T-cell (primary cell): ENCODE measurements at regions of chr4 and their contacts with region 1.

Region 1: GRCh38 chr4:98688411-98689290 is 30.2 kb upstream of the TSPAN5 start:
- DNase-seq: peak in 5 of 35 experiments; percentile 9 to 56 (median 15)
- ATAC-seq: peak; percentile 67 to 83 (median 71)
- H3K4me3 ChIP-seq: no peak overlapping the region
- H3K4me3 Mint-ChIP-seq: peak overlapping the region; percentile 18 to 63 (median 55)
- H3K27ac ChIP-seq: peak overlapping the region; percentile 39
- H3K27ac Mint-ChIP-seq: peak overlapping the region; percentile 81 to 90
- H3K4me1 ChIP-seq: peaks cover 12 to 15% of the 10 kb centered on the region in 2 experiments
- H3K4me1 Mint-ChIP-seq: peaks cover 41 to 58% (median 54%) of the 10 kb centered on the region in 3 donors
- H3K27me3 ChIP-seq: no peaks in the 10 kb centered on the region
- H3K27me3 Mint-ChIP-seq: no peaks in the 10 kb centered on the region

Region 2: GRCh38 chr4:98639523-98639922 is 49.1 kb before region 1 on chr4:
- CTCF ChIA-PET with region 1: no interaction called
- POLR2A ChIA-PET with region 1: no interaction called
- DNase-seq: peak in 2 of 35 experiments; percentile 7 to 53
- ATAC-seq: peak; percentile 40 to 85 (median 61)
- H3K4me3 ChIP-seq: peak overlapping the region in 1 of 2 donors; percentile 20
- H3K4me3 Mint-ChIP-seq: peak overlapping the region; percentile 70 to 78 (median 73)
- H3K27ac ChIP-seq: peak overlapping the region; percentile 57
- H3K27ac Mint-ChIP-seq: peak overlapping the region; percentile 90 to 92
- H3K4me1 ChIP-seq: peaks cover 2 to 18% of the 10 kb centered on the region in 2 experiments
- H3K4me1 Mint-ChIP-seq: peaks cover 45 to 58% (median 55%) of the 10 kb centered on the region in 3 donors
- H3K27me3 ChIP-seq: no peaks in the 10 kb centered on the region
- H3K27me3 Mint-ChIP-seq: no peaks in the 10 kb centered on the region

Region 3: DNA sequence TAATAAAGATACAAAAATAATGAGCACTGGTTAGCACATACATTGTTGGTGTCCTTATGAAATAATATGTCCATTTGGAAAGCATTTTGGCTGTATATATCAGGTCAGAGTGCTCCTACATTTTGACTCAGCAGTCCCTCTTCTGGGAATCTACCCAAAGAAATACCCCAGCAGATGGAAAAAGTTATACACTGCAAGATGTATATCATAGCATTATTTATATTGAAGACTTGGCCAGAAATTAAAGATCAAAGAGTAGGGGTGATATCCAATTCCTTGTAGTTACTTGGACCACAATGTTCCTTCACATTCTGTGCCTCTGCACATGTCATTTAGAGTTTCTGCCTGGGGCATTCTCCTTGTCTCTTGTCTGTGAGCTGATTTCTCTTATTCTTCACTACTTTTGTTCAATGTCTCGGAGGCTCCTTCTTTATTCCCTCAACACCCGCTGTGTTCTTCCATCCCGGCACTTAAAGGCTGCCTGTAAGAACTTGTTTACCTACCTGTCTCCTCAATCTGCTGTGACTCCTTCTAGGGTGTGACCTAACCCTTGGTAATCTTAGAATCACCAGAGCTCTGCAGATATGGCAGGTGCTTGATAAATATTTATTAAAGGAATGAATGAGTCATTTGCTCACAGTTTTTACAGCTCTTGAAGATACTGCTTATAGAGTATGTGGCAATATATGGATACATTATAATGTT is 27.1 kb before region 1 on chr4:
- CTCF ChIA-PET with region 1: interaction called in 1 of 2 experiments, 3 read pairs
- POLR2A ChIA-PET with region 1: interaction called in 1 of 2 experiments, 13 read pairs
- DNase-seq: no peak
- ATAC-seq: no peak
- H3K4me3 ChIP-seq: no peak overlapping the region
- H3K4me3 Mint-ChIP-seq: no peak overlapping the region
- H3K27ac ChIP-seq: peak overlapping the region; percentile 97
- H3K27ac Mint-ChIP-seq: peak overlapping the region; percentile 98 to 99
- H3K4me1 ChIP-seq: peaks cover 40 to 49% of the 10 kb centered on the region in 2 experiments
- H3K4me1 Mint-ChIP-seq: peaks cover 66 to 70% (median 68%) of the 10 kb centered on the region in 3 donors
- H3K27me3 ChIP-seq: no peaks in the 10 kb centered on the region
- H3K27me3 Mint-ChIP-seq: no peaks in the 10 kb centered on the region

Region 4: GRCh38 chr4:98710831-98711230 is 22.2 kb after region 1 on chr4:
- CTCF ChIA-PET with region 1: no interaction called
- POLR2A ChIA-PET with region 1: no interaction called
- DNase-seq: no peak
- ATAC-seq: no peak
- H3K4me3 ChIP-seq: no peak overlapping the region
- H3K4me3 Mint-ChIP-seq: no peak overlapping the region
- H3K27ac ChIP-seq: no peak overlapping the region
- H3K27ac Mint-ChIP-seq: no peak overlapping the region
- H3K4me1 ChIP-seq: peaks cover 3 to 6% of the 10 kb centered on the region in 2 experiments
- H3K4me1 Mint-ChIP-seq: peaks cover 22 to 31% (median 24%) of the 10 kb centered on the region in 3 donors
- H3K27me3 ChIP-seq: no peaks in the 10 kb centered on the region
- H3K27me3 Mint-ChIP-seq: no peaks in the 10 kb centered on the region

Region 5: DNA sequence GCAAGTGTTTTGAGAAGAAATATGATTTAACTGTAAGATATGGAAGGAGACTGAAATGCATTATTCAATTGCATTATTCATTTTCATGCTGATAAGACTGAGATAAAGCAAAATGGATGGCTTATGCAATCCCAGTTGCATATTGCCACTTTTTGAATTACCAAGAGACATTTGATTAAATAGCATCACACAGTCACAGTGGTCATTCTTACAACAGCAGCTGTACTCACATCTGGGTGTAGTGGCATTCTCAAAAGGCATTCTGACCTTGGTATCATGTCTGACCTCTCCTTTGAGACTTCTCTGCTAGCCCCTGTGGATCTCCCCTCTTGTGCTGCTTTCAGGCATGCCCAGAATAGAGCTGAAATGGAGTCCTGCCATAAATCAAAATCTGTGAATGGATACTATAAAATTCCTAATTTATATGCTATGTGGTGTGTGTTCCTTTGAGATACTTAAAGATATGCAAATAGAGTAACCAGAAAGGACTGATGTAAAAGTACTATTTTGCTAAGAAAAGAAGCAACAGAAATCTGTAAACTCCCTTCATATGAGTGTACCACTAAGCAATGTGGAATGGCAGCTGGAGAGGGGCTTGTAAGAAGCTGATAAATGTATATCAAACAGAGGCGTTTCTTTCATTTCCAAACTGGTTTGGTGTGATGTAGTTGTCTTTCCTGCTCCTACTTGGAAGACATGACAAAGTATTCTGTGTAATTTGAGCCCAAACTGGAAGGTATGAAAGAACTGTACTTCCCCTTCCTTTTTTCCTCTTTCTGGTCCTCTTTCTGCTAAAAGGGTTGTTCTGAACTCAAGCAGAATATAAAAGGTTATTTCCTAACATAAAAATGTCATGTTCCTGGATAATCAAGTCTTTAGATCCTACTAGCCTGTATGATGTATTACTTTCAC is 281.5 kb after region 1 on chr4:
- CTCF ChIA-PET with region 1: no interaction called
- POLR2A ChIA-PET with region 1: no interaction called
- DNase-seq: no peak
- ATAC-seq: no peak
- H3K4me3 ChIP-seq: no peak overlapping the region
- H3K4me3 Mint-ChIP-seq: no peak overlapping the region
- H3K27ac ChIP-seq: no peak overlapping the region
- H3K27ac Mint-ChIP-seq: no peak overlapping the region
- H3K4me1 ChIP-seq: no peaks in the 10 kb centered on the region
- H3K4me1 Mint-ChIP-seq: no peaks in the 10 kb centered on the region
- H3K27me3 ChIP-seq: peaks cover 0 to 3% of the 10 kb centered on the region in 2 experiments
- H3K27me3 Mint-ChIP-seq: peaks cover 3 to 8% of the 10 kb centered on the region in 2 donors